HAP-1 (cell line): ENCODE measurements at regions of chr14 and their contacts with region 1.

Region 1: DNA sequence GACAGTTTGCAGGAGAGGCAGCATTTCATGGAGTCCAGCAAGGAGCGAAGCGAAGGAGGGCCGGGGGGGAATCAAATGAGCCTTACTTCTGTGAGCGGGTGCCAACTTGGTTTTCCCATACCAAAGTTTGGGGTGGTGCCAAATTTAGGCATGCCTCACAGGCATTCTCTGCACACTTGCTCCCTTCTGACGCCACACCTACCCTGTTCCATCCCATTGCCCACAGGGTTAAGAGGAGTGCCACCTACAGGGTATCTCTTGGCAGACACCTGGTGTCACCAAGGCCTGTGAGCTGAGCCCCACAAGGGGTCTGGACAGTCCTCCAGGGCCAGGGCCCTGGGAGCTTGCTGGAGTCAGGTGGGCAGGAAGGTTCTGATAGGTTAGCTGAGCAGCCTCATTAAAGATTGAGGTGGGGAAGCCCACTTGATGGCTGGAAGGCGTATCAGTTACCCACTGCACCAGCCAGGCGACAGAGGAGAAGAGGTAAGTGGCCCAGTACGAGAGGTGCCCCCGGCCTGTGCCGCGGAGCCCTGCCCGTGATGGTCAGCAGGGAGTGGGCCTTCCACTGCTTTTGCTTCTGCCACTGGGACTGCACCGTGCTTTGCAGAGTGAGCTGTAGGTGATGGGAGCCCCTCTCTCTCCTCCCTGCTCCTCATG is 45.2 kb downstream of the DEGS2 start:
- DNase-seq: no peak
- H3K4me3 ChIP-seq: no peak overlapping the region
- H3K4me1 ChIP-seq: no peaks in the 10 kb centered on the region
- H3K27me3 ChIP-seq: no peaks in the 10 kb centered on the region

Region 2: DNA sequence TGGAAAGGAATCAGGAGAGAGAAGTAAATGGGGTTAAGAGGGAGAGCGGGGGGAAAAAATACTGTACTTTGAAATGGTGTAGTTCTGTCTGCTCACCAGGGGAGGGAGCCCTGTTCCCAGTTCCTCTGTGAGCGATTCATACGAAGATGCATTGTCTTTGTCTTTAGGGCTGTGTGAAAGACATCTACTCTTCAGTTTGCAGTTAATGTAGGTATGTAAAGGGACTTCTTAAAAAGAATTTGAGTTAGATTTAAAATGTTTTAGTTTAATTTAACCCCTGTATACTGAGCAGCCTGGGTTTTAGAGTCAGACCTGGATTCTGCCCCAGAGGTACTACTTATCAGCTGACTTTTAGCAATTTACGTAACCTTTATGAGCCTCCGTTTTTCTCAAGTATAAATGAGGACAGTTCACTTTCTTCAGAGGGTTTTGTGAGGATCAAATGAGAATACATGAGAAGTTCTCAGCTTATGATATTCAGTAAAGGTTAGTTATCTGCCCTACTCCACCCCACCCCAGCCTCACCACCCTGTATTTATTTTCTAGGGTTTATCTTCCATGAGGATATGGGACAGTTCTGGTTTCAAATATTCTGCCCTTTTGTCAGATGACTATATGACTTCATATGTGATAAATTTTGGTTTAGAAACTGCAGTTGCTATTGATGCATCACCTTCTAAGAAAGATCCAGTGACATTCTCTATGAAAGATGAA is 131.5 kb before region 1 on chr14:
- in situ Hi-C with region 1: loop called (anchors 5 kb)
- DNase-seq: peak; percentile 68
- H3K4me3 ChIP-seq: no peak overlapping the region
- H3K4me1 ChIP-seq: no peaks in the 10 kb centered on the region
- H3K27me3 ChIP-seq: no peaks in the 10 kb centered on the region

Region 3: DNA sequence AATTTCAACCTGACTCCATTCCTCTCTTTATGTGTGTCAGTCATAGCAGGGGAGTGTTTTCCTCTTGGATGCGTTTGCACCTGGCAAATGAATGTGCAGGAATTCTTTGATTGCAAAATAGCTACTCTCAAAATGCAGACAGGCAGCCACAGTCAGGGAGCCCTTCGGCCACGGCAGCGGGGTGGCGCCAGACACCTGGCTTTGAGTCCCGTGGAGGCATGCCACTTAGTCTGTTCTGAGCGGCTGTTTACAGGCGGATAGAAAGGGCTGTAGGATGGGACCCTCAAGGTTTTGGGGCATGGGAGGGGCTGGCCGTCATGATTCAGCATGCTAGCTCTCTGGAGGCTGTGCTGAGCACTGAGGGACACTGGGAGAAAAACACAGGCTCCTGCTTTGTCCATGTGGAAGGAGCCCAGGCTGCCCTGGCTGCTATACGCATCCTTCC is 326.0 kb after region 1 on chr14:
- in situ Hi-C with region 1: no loop called
- DNase-seq: peak; percentile 23 to 69
- H3K4me3 ChIP-seq: no peak overlapping the region
- H3K4me1 ChIP-seq: no peaks in the 10 kb centered on the region; the same call in 1 of the 2 replicates
- H3K27me3 ChIP-seq: no peaks in the 10 kb centered on the region

Region 4: GRCh38 chr14:100900837-100901390 is 786.7 kb after region 1 on chr14:
- in situ Hi-C with region 1: no loop called
- DNase-seq: peak; percentile 52 to 90
- H3K4me3 ChIP-seq: no peak overlapping the region
- H3K4me1 ChIP-seq: peaks cover 31% of the 10 kb centered on the region
- H3K27me3 ChIP-seq: peaks cover 10% of the 10 kb centered on the region